Dendritic cell treated with granulocyte-macrophage colony-stimulating factor and Interleukin-4, amounts not matched to agents 40 ng/mL and 50 ng/mL, for 4 days (primary cell): ENCODE measurements at regions of chr2 and their contacts with region 1.

Region 1: DNA sequence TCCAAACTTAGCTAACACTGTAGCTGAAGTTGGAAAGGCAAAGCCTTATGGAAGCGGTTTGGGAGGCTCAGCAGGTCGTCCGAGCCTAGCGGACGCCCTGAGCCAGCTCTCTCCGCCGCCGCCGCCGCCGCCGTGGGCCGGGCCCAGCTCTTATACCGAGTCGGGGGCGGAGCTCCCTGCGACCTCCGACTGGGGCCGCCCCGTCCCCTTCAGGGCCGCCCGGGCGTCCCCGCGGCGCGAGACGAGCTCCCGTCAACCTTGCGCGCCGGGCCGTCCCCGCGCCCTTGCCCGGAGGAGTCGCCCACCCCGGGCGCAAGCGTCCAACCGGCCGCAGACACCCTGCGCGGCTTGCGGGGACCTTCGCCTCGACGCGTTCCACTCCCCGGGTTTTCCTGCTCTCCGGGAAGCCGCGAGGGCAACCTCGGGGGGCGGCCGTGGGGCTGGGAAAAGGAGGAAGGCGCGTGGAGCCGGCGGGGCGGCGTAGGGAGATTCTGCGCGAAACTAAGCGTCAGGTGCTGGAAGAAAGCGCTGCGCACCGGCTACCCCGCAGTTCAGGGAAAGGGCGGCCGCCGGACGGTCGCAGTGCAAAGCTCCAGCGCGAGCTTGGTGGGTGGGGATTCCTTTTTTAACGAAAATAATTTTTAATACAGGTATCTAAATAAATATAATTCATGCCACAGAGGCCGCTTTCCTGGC is at the start of gene SLC40A1:
- H3K4me3 Mint-ChIP-seq: peak within 1 kb of the TSS; percentile 92
- H3K27ac Mint-ChIP-seq: peak within 1 kb of the TSS; percentile 76
- H3K4me1 Mint-ChIP-seq: peaks cover 67% of the 10 kb centered on the region
- H3K27me3 Mint-ChIP-seq: peaks cover 14% of the 10 kb centered on the region

Region 2: DNA sequence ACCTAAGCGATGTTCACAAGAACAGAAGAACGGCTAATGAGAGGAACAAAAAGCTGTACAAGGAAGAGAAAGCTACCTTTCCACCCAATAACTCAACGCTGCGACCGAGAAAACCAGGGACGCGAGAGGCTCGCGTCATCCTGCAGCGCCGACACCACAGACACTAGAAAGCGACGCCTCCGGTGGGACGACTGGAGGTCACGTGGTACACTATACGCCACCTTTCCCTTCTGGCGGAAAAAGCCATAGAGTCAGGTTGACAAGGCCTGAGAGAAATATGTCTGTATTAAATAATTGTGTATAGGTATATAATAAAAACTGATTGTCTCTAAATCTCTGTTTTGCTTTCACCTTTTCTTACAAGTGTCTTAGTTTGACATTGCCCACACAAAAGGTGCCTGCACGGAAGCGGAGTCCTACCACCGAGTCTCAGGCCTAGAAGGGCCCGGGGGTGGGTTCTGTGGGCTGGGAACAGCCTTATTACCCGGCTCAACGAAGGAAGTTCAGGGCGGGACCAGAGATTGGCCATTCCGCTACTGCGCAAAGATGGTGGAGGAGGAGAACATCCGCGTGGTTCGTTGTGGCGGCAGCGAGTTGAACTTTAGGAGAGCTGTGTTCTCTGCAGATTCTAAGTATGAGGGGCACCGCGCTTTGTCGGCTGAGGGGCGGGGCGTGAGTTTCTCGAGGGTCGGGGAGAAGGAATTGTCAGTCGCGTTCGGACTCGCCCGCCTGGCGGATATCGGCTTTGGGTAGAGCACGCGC is 139.7 kb before region 1 on chr2 and contains the start of gene WDR75:
- intact Hi-C with region 1: loop called (anchors 5 kb)
- H3K4me3 Mint-ChIP-seq: peak within 1 kb of the TSS; percentile 99
- H3K27ac Mint-ChIP-seq: peak within 1 kb of the TSS; percentile 99
- H3K4me1 Mint-ChIP-seq: no peaks in the 10 kb centered on the region
- H3K27me3 Mint-ChIP-seq: peaks cover 2% of the 10 kb centered on the region

Region 3: DNA sequence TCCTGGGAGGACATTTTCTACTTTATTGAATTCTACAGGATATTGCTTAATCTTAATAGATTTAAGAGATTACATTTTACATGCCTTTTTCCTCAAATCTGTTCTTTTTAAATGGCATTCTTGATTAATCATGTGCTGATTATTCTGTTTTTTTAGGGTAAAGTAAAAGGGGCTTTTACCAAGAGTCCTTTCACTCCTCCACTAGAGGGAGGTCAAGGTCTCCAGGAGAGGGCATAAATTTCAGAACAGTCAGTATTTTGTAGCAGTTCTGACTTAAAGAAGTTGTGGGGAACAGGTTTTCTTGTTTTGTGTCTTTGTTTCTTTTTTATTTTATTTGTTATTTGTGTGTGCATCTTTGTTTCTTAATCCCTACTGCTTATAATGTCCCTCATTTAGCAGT is 114.1 kb before region 1 on chr2:
- intact Hi-C with region 1: loop called (anchors 5 kb)
- H3K4me3 Mint-ChIP-seq: no peak overlapping the region
- H3K27ac Mint-ChIP-seq: no peak overlapping the region
- H3K4me1 Mint-ChIP-seq: peaks cover 10% of the 10 kb centered on the region
- H3K27me3 Mint-ChIP-seq: no peaks in the 10 kb centered on the region

Region 4: GRCh38 chr2:189521699-189522434 is 58.9 kb before region 1 on chr2:
- intact Hi-C with region 1: no loop called
- H3K4me3 Mint-ChIP-seq: no peak overlapping the region
- H3K27ac Mint-ChIP-seq: peak overlapping the region; percentile 59
- H3K4me1 Mint-ChIP-seq: peaks cover 48% of the 10 kb centered on the region
- H3K27me3 Mint-ChIP-seq: no peaks in the 10 kb centered on the region

Region 5: GRCh38 chr2:189618197-189618596 is 37.4 kb after region 1 on chr2:
- intact Hi-C with region 1: loop called (anchors 5 kb)
- H3K4me3 Mint-ChIP-seq: no peak overlapping the region
- H3K27ac Mint-ChIP-seq: no peak overlapping the region
- H3K4me1 Mint-ChIP-seq: peaks cover 9% of the 10 kb centered on the region
- H3K27me3 Mint-ChIP-seq: no peaks in the 10 kb centered on the region